ENCODE measurements at regions of chr1 and their contacts with region 1.

Region 1: DNA sequence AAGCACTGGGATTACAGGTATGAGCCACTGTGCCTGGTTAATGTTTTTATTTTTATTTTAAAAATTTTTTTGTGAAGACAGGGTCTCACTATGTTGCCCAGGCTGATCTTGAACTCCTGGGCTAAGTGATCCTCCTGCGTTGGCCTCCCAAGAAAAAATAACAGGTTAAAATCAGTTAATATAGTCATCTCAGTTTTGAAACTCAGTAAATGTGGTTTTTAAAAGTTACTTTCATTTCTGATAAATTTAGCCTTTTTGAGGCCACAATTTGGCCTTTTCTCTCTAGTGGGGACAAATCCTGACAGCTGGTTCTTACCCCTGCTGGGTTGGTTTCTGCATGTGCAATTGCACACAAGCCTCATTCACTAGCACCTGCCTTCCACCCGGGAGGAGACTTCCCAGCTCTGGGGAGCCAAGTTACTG is 13.3 kb downstream of the PMF1 start:
- DNase-seq: no peak
- ATAC-seq: peak; percentile 5
- H3K4me3 Mint-ChIP-seq: no peak overlapping the region
- H3K27ac Mint-ChIP-seq: peak overlapping the region; percentile 90
- H3K4me1 Mint-ChIP-seq: peaks cover 51% of the 10 kb centered on the region
- H3K27me3 Mint-ChIP-seq: no peaks in the 10 kb centered on the region

Region 2: DNA sequence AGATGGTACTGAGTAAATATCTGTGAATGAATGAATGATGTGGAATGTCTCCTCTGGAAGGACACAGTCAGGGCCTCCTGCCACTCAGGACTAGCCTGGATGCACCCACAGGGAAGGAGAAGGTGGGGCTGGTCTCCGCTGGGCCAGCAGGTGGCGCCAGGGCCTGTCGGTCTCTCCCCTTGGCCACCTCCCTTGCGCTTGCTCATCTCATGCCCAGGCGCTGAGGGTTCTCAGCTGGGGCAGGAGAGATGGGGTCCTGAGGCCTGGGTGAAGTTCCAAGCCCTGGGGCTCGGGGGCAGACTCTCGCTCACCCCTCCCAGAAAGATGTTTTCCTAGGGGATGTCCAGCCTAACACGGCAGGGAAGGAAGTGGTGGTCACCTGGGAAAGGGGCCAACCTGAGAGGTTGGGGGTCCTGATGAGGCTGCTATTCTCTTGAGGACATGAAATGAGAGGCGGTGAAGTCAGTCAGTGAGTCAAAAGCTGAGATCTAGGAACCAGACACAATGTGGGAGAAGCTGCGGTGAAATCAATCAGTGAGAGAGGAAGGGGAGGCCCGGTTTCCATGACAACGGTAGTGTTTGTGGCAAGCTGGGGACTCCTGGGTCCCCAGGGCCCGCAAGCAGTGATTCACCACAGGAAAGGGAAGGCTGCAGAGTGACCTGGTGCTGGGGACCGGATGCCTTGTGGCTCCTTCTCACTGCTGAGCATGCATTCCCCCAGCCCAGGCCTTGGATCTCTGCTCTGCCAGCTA is 129.3 kb before region 1 on chr1:
- CTCF ChIA-PET with region 1: interaction called, 38 read pairs
- POLR2A ChIA-PET with region 1: no interaction called
- DNase-seq: peak; percentile 85
- ATAC-seq: peak; percentile 86
- H3K4me3 Mint-ChIP-seq: peak overlapping the region; percentile 0
- H3K27ac Mint-ChIP-seq: peak overlapping the region; percentile 33
- H3K4me1 Mint-ChIP-seq: peaks cover 36% of the 10 kb centered on the region
- H3K27me3 Mint-ChIP-seq: peaks cover 47% of the 10 kb centered on the region

Region 3: GRCh38 chr1:156146020-156146768 is 79.9 kb before region 1 on chr1:
- CTCF ChIA-PET with region 1: interaction called, 254 read pairs
- POLR2A ChIA-PET with region 1: interaction called, 22 read pairs
- DNase-seq: peak; percentile 72
- ATAC-seq: peak; percentile 80
- H3K4me3 Mint-ChIP-seq: peak overlapping the region; percentile 63
- H3K27ac Mint-ChIP-seq: peak overlapping the region; percentile 85
- H3K4me1 Mint-ChIP-seq: peaks cover 47% of the 10 kb centered on the region
- H3K27me3 Mint-ChIP-seq: no peaks in the 10 kb centered on the region

Region 4: DNA sequence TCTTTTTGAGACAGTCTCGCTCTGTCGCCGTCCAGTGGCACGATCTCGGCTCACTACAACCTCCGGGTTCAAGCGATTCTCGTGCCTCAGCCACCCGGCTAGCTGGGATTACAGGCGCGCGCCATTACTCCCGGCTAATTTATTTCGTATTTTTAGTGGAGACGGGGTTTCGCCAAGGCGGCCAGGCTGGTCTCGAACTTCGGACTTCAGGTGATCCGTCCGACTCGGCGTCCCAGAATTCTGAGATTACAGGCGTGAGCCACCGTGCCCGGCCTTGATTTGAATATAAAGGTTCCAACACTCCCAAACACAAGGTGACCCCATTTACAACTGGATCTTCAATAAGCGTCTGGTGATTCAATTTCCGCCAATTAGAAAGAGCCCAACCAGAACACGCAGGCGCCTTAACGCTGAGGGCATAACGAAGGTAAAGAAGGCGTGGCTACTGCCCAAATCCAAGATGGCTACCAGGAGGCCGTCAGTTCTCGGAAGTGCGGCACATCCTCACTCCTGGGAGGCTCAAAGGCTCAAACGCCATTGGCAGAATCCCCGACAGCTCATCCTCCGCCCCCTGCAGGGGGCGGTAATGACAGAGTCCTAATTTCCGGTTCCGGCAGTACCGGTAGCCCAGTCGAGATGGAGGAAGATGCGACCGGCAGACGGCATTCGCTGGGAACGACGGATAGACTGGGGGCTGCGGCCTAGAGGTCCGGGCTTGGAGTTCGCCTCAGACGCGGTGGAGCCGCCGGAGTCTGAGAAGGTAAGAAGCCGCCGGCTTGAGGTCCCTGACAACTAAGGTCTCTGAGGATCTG is 32.4 kb before region 1 on chr1 and contains the start of gene SLC25A44:
- CTCF ChIA-PET with region 1: interaction called, 65 read pairs
- POLR2A ChIA-PET with region 1: interaction called, 25 read pairs
- DNase-seq: peak; percentile 98
- ATAC-seq: peak; percentile 98
- H3K4me3 Mint-ChIP-seq: peak within 1 kb of the TSS; percentile 89
- H3K27ac Mint-ChIP-seq: peak within 1 kb of the TSS; percentile 87
- H3K4me1 Mint-ChIP-seq: peaks cover 57% of the 10 kb centered on the region
- H3K27me3 Mint-ChIP-seq: no peaks in the 10 kb centered on the region
- total RNA-seq, gene SLC25A44: 31.8 to 33.8 TPM

Region 5: GRCh38 chr1:156212833-156213643 is 13.1 kb before region 1 on chr1 and contains the start of gene PMF1:
- CTCF ChIA-PET with region 1: interaction called, 68 read pairs
- POLR2A ChIA-PET with region 1: interaction called, 75 read pairs
- DNase-seq: peak; percentile 98
- ATAC-seq: peak; percentile 96
- H3K4me3 Mint-ChIP-seq: peak within 1 kb of the TSS; percentile 96
- H3K27ac Mint-ChIP-seq: peak within 1 kb of the TSS; percentile 99
- H3K4me1 Mint-ChIP-seq: peaks cover 45% of the 10 kb centered on the region
- H3K27me3 Mint-ChIP-seq: no peaks in the 10 kb centered on the region
- total RNA-seq, gene PMF1: 72.3 to 77.3 TPM